Activated CD4-positive, alpha-beta memory T cell treated with anti-CD3 and anti-CD28 coated beads for 36 hours (primary cell): ENCODE measurements at regions of chr6 and their contacts with region 1.

Region 1: DNA sequence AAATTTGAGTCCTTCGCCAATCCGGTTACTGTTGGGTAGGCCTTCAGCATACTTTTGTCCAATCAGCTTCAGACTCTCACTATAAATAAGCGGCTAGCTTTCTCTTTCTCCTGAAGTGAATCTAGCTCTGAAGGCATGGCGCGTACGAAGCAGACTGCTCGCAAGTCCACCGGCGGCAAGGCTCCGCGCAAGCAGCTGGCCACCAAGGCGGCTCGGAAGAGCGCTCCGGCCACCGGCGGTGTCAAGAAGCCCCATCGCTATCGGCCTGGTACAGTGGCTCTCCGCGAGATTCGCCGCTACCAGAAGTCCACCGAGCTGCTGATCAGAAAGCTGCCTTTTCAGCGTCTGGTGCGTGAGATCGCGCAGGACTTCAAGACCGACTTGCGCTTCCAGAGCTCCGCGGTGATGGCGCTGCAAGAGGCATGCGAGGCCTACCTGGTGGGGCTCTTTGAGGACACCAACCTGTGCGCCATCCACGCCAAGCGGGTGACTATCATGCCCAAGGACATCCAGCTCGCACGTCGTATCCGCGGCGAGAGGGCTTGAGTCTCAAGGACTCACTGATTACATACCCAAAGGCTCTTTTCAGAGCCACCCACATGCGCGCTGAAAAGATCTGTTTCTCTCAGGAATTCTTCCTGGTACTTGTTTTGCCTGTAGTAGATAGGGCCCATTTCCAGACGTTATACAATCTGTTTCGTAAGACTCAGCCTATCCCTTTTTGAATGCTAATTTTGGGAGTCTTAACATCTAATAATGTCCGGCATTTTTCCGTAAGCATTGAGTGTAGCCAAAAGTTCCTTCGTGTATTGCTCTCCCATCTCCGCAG is 102.0 kb downstream of the OR2B2 start:
- DNase-seq: peak; percentile 82
- H3K4me3 Mint-ChIP-seq: peak overlapping the region; percentile 85
- H3K27ac Mint-ChIP-seq: peak overlapping the region; percentile 96
- H3K4me1 Mint-ChIP-seq: peaks cover 61% of the 10 kb centered on the region
- H3K27me3 Mint-ChIP-seq: peaks cover 4% of the 10 kb centered on the region

Region 2: GRCh38 chr6:26031595-26032339 is 1778.4 kb before region 1 on chr6:
- CTCF ChIA-PET with region 1: no interaction called
- POLR2A ChIA-PET with region 1: interaction called, 3 read pairs
- intact Hi-C with region 1: loop called (anchors 5 kb)
- DNase-seq: peak; percentile 93
- H3K4me3 Mint-ChIP-seq: peak overlapping the region; percentile 83
- H3K27ac Mint-ChIP-seq: peak overlapping the region; percentile 99
- H3K4me1 Mint-ChIP-seq: peaks cover 49% of the 10 kb centered on the region
- H3K27me3 Mint-ChIP-seq: peaks cover 17% of the 10 kb centered on the region

Region 3: GRCh38 chr6:27795697-27796494 is 14.3 kb before region 1 on chr6:
- CTCF ChIA-PET with region 1: interaction called, 13 read pairs
- POLR2A ChIA-PET with region 1: interaction called, 5 read pairs
- intact Hi-C with region 1: no loop called
- DNase-seq: peak; percentile 39
- H3K4me3 Mint-ChIP-seq: no peak overlapping the region
- H3K27ac Mint-ChIP-seq: peak overlapping the region; percentile 67
- H3K4me1 Mint-ChIP-seq: peaks cover 22% of the 10 kb centered on the region
- H3K27me3 Mint-ChIP-seq: peaks cover 8% of the 10 kb centered on the region

Region 4: GRCh38 chr6:27825025-27825793 is 15.1 kb after region 1 on chr6:
- CTCF ChIA-PET with region 1: interaction called, 4 read pairs
- POLR2A ChIA-PET with region 1: interaction called, 45 read pairs
- intact Hi-C with region 1: loop called (anchors 1 kb)
- DNase-seq: no peak
- H3K4me3 Mint-ChIP-seq: peak overlapping the region; percentile 87
- H3K27ac Mint-ChIP-seq: peak overlapping the region; percentile 98
- H3K4me1 Mint-ChIP-seq: peaks cover 32% of the 10 kb centered on the region
- H3K27me3 Mint-ChIP-seq: no peaks in the 10 kb centered on the region

Region 5: GRCh38 chr6:27864906-27865849 is 55.0 kb after region 1 on chr6:
- CTCF ChIA-PET with region 1: interaction called, 7 read pairs
- POLR2A ChIA-PET with region 1: interaction called, 198 read pairs
- intact Hi-C with region 1: loop called (anchors 1 kb)
- DNase-seq: peak; percentile 85
- H3K4me3 Mint-ChIP-seq: peak overlapping the region; percentile 96
- H3K27ac Mint-ChIP-seq: peak overlapping the region; percentile 100
- H3K4me1 Mint-ChIP-seq: peaks cover 38% of the 10 kb centered on the region
- H3K27me3 Mint-ChIP-seq: peaks cover 20% of the 10 kb centered on the region

Region 6: GRCh38 chr6:27871924-27872638 is 61.9 kb after region 1 on chr6:
- CTCF ChIA-PET with region 1: interaction called, 3 read pairs
- POLR2A ChIA-PET with region 1: interaction called, 198 read pairs
- intact Hi-C with region 1: loop called (anchors 1 kb)
- DNase-seq: peak; percentile 82
- H3K4me3 Mint-ChIP-seq: peak overlapping the region; percentile 81
- H3K27ac Mint-ChIP-seq: peak overlapping the region; percentile 99
- H3K4me1 Mint-ChIP-seq: peaks cover 30% of the 10 kb centered on the region
- H3K27me3 Mint-ChIP-seq: peaks cover 8% of the 10 kb centered on the region